Panc1 (cell line): ENCODE measurements at regions of chr19 and their contacts with region 1.

Region 1: DNA sequence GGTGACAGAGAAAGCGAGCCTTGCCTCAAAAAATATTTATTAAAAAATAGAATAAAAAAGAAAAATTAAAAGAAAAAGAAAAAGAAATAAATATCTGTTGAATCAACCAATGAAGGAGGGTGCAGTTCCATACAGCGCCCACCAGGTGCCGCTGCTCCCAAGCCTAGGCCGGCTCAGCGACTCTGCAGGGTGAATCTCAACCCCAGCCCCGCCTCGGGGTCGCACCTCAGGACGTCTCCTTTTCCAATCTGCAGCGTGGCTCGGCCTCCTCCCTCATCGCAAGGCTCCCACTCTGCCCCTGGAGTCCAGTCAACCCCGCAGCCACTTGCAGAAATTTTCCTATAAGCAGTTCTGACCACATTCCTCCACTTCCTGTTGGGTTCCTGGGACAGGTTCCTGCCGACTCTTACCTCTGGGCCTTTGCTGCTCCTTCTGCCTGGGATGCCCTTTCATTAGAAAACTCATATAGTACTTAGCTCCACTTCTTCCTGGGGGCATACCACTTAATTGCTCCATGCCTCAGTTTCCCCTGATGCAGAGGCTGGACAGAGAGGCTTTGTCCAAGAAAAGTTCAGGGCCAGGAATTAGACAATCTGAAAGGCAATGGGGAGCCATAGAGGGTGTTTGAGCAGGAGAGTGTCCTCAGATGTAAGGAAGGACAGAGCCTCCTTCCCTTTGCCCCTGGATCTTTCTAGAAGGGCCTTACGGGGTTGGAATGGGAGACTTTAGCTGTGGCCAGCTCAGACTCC is 24.3 kb downstream of the NFILZ start:
- DNase-seq: peak; percentile 33
- ATAC-seq: peak; percentile 80
- H3K4me3 ChIP-seq: peak overlapping the region in 1 of 2 experiments; percentile 34; a peak in 2 of 4 replicates
- H3K27ac ChIP-seq: peak overlapping the region; percentile 32
- H3K4me1 ChIP-seq: no peaks in the 10 kb centered on the region
- H3K27me3 ChIP-seq: no peaks in the 10 kb centered on the region
- CTCF ChIP-seq: peak; percentile 94

Region 2: DNA sequence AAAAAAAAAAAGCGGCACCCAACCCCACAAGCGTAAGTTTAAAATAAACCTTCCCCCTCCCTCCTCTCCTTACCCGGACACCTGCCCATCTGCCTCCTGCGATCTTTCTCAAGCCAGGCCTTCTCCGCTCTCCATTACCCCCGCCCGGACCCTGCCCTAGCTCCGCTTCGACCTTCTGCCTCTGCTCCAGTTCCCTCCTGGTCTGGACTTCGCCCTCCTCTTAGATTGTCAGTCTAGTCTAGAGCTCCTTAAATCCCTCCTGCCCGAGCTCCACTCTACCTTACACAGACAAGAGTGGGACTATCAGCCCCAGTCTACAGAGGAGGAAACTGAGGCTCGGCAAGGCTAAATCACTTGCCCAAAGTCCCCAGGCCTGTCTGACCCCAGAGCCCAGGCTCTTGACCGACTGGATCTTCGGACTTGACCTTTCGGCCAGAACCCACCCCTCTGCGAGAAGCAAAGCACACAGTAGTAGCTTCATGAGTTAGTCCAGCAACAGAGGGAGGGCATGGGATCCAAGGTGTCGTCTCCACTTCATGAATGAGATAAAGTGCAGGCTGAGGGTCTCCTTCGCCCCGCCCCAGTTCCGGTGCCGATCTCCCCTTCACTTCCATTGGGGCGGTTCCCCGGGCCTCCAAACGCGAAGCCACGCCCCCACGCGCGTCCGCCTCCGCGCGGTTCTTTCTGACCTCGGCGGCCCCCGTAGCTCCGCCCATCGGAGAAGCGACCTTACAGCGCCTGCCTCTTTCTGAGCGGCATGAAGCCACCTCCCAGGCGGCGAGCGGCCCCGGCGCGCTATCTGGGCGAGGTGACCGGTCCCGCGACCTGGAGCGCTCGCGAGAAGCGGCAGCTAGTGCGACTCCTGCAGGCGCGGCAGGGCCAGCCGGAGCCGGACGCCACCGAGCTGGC is 734.9 kb before region 1 on chr19 and contains the start of gene SNAPC2:
- CTCF ChIA-PET with region 1: no interaction called
- POLR2A ChIA-PET with region 1: interaction called, 19 read pairs
- in situ Hi-C with region 1: no loop called
- intact Hi-C with region 1: no loop called
- DNase-seq: no peak
- ATAC-seq: peak; percentile 62
- H3K4me3 ChIP-seq: peak within 1 kb of the TSS; percentile 61 to 65
- H3K27ac ChIP-seq: peak within 1 kb of the TSS; percentile 94
- H3K4me1 ChIP-seq: peaks cover 20% of the 10 kb centered on the region
- H3K27me3 ChIP-seq: no peaks in the 10 kb centered on the region
- CTCF ChIP-seq: no peak
- total RNA-seq, gene SNAPC2: 63.0 TPM

Region 3: GRCh38 chr19:8695501-8695900 is 40.7 kb after region 1 on chr19:
- CTCF ChIA-PET with region 1: interaction called, 3 read pairs
- POLR2A ChIA-PET with region 1: no interaction called
- in situ Hi-C with region 1: no loop called
- intact Hi-C with region 1: loop called (anchors 2 kb)
- DNase-seq: no peak
- ATAC-seq: no peak
- H3K4me3 ChIP-seq: no peak overlapping the region
- H3K27ac ChIP-seq: no peak overlapping the region
- H3K4me1 ChIP-seq: no peaks in the 10 kb centered on the region
- H3K27me3 ChIP-seq: no peaks in the 10 kb centered on the region
- CTCF ChIP-seq: no peak

Region 4: DNA sequence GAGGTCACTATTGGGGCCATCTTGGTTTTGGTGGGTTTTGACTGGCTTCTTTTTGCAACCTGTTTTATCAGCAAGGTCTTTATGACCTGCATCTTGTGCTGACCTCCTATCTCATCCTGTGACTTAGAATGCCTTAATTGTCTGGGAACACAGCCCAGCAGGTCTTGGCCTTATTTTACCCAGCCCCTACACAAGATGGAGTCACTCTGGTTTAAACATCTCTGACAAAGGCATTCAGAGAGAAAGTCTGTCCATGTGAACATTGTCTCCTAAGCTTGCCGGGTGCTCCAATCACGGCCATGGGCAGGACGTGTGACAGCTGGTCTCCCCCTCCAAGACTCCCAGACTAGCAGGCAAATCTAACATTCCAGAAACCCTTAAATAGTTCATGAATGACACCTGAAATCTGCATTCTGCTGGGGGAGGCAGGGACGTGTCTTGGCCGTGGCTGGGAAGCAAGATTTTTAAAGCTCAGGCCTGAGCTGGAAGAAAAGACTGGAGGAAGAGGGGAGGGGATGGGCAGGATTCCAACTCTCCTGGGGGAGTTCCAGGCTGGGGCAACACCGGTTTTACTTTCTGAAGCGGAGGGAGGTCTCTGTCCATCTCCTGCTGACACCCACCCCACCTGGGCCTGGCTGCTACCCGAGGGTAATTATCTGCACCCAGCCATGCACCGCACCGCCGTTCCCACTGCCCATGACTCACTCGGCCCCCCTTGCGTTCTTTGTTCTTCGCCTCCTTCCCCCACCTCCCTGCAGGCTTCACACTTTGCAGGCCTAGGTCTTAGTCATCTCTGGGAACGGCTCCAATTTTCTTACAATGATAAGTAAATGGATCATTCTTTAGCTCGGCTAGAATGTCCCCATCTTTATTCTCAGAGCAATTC is 420.5 kb after region 1 on chr19:
- CTCF ChIA-PET with region 1: no interaction called
- POLR2A ChIA-PET with region 1: no interaction called
- in situ Hi-C with region 1: no loop called
- intact Hi-C with region 1: loop called (anchors 10 kb)
- DNase-seq: peak; percentile 78
- ATAC-seq: peak; percentile 95
- H3K4me3 ChIP-seq: no peak overlapping the region
- H3K27ac ChIP-seq: peak overlapping the region; percentile 95
- H3K4me1 ChIP-seq: peaks cover 31% of the 10 kb centered on the region
- H3K27me3 ChIP-seq: no peaks in the 10 kb centered on the region
- CTCF ChIP-seq: no peak